Heart right ventricle (tissue), 16 donors: ENCODE measurements at regions of chr6 and their contacts with region 1.

Region 1: DNA sequence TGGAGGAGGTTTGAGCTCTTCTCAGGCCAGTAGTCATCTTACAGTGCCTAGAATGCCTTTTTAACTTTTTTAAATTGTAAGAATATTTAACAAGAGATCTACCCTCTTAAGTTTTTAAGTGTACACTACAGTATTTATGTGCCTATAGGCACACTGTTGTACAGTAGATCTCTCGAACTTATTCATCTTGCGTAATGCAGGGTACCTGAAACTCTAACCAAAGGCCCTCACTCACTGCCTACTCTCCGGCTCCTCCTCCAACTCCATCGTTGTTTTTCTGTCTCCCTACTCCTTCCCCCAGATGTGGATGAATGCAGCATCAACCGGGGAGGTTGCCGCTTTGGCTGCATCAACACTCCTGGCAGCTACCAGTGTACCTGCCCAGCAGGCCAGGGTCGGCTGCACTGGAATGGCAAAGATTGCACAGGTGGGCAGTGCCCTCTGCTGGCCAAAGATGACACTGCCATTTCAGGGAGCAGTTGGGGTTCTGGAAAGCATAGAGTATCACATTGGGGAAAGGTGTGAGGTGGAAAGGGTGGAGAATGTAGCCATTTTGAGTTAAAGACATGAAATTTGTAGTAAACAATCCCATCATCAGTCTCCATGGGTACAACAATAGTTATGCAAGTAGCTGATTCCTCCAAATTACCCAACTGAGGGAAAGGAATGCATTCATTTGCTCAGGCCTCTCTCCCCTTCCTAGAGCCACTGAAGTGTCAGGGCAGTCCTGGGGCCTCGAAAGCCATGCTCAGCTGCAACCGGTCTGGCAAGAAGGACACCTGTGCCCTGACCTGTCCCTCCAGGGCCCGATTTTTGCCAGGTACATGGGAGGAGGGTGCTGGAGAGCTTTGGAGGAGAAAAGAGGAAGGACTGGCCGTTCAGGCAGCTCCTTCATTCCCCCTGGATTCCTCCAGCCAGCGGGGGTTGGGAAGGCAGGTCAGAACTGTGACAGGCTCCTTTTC is 18.4 kb upstream of the ZNF76 start:
- DNase-seq: peak; percentile 68 to 77
- ATAC-seq: peak in 7 of 8 donors; percentile 19 to 48 (median 35)
- H3K4me3 ChIP-seq: no peak overlapping the region
- H3K27ac ChIP-seq: peak overlapping the region in 2 of 10 donors; percentile 7 to 31
- H3K4me1 ChIP-seq: peaks cover 9 to 51% (median 25%) of the 10 kb centered on the region in 9 donors
- H3K27me3 ChIP-seq: no peaks in the 10 kb centered on the region
- CTCF ChIP-seq: peak; percentile 83 to 98 (median 95)

Region 2: GRCh38 chr6:34867484-34867883 is 373.6 kb before region 1 on chr6:
- intact Hi-C with region 1: loop called in 1 of 10 experiments (anchors 10 kb)
- DNase-seq: no peak
- ATAC-seq: peak in 7 of 8 donors; percentile 26 to 66 (median 48)
- H3K4me3 ChIP-seq: no peak overlapping the region
- H3K27ac ChIP-seq: peak overlapping the region in 7 of 10 donors; percentile 13 to 76 (median 48)
- H3K4me1 ChIP-seq: peaks cover 0 to 35% (median 19%) of the 10 kb centered on the region in 9 donors
- H3K27me3 ChIP-seq: no peaks in the 10 kb centered on the region
- CTCF ChIP-seq: peak in 7 of 9 donors; percentile 11 to 51 (median 33)

Region 3: DNA sequence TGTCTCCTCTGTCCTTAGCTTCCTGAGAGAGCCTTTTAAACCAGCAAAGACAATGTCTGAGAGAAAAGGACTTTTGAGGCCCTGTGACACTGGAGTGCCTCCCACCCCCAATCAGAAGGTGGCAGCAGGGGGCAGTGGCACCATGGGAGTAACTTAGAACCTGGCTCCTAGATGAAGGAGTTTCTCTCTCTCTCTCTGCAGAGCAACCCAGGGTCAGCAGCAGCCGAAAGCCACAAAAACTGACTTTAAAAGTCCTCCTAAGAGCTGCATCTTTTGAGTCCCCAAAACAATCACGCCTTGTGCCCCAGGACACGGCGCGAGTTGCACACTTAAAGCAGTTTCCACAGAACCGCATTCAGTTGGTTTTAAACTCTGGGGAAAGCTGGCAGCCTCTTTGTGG is 94.7 kb before region 1 on chr6:
- intact Hi-C with region 1: loop called (anchors 1 to 5 kb)
- DNase-seq: peak; percentile 37 to 40
- ATAC-seq: peak; percentile 67 to 90 (median 86)
- H3K4me3 ChIP-seq: no peak overlapping the region
- H3K27ac ChIP-seq: no peak overlapping the region
- H3K4me1 ChIP-seq: peaks cover 0 to 11% (median under 1%) of the 10 kb centered on the region in 9 donors
- H3K27me3 ChIP-seq: peaks cover 0 to 1% (median 0%) of the 10 kb centered on the region in 7 donors
- CTCF ChIP-seq: peak; percentile 42 to 72 (median 63)

Region 4: GRCh38 chr6:35209081-35209480 is 32.0 kb before region 1 on chr6:
- intact Hi-C with region 1: loop called in 2 of 10 experiments (anchors 5 kb)
- DNase-seq: no peak
- ATAC-seq: no peak
- H3K4me3 ChIP-seq: no peak overlapping the region
- H3K27ac ChIP-seq: no peak overlapping the region
- H3K4me1 ChIP-seq: peaks cover 0 to 8% (median 5%) of the 10 kb centered on the region in 9 donors
- H3K27me3 ChIP-seq: peaks cover 0 to 49% (median 14%) of the 10 kb centered on the region in 7 donors
- CTCF ChIP-seq: no peak

Region 5: GRCh38 chr6:35219683-35220326 is 21.3 kb before region 1 on chr6:
- intact Hi-C with region 1: loop called in 1 of 10 experiments (anchors 2 kb)
- DNase-seq: no peak
- ATAC-seq: no peak
- H3K4me3 ChIP-seq: no peak overlapping the region
- H3K27ac ChIP-seq: peak overlapping the region in 5 of 10 donors; percentile 13 to 58 (median 48)
- H3K4me1 ChIP-seq: peaks cover 0 to 78% (median 43%) of the 10 kb centered on the region in 9 donors
- H3K27me3 ChIP-seq: peaks cover 0 to 29% (median 11%) of the 10 kb centered on the region in 7 donors
- CTCF ChIP-seq: no peak